Activated CD8-positive, alpha-beta T cell treated with anti-CD3 and anti-CD28 coated beads for 36 hours (primary cell): ENCODE measurements at regions of chr2 and their contacts with region 1.

Region 1: DNA sequence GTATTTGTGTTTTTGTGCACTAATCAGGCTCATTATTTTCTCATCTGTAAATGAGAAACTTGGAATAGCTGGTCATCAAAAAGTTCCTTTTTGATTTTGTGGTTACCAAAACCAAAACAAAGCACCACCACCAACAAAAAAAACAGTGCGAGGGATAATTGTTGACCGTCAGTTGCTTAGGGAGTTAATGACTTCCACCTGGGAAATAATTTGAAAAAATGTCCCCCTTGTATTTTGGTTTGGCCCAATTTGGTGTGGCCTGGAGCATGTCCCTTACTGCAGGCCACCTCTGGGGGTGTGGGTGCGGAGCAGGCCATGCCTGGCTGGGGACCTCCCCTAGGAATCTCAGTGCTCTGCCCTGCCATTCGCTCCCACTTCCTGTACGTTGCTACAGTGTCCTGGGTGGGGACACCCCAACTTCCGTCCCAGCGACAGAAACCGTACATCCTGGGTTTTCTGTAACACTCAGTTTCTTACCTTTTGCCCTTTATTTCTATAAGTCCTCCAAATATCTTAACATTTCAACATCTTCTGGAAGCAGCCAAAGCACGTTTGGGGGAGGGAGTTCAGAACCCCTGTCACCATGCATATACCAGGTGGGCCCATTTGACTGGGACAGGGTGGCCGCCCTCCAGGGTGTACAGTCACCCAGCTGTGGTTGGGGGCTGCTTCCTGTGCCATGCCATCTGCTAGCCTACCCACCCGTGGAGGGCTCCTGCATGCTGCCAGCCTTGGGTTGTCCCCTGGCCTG is 31.3 kb downstream of the NCK2 start:
- DNase-seq: peak; percentile 63
- ATAC-seq: peak; percentile 70
- H3K4me3 Mint-ChIP-seq: peak overlapping the region; percentile 52
- H3K27ac Mint-ChIP-seq: peak overlapping the region; percentile 87
- H3K4me1 Mint-ChIP-seq: peaks cover 90% of the 10 kb centered on the region
- H3K27me3 Mint-ChIP-seq: no peaks in the 10 kb centered on the region
- CTCF ChIP-seq: no peak

Region 2: GRCh38 chr2:105373895-105374401 is 402.0 kb before region 1 on chr2:
- CTCF ChIA-PET with region 1: no interaction called
- POLR2A ChIA-PET with region 1: no interaction called
- intact Hi-C with region 1: no loop called
- DNase-seq: peak; percentile 16
- ATAC-seq: peak; percentile 37
- H3K4me3 Mint-ChIP-seq: peak overlapping the region; percentile 33
- H3K27ac Mint-ChIP-seq: peak overlapping the region; percentile 84
- H3K4me1 Mint-ChIP-seq: peaks cover 6% of the 10 kb centered on the region
- H3K27me3 Mint-ChIP-seq: no peaks in the 10 kb centered on the region
- CTCF ChIP-seq: no peak

Region 3: DNA sequence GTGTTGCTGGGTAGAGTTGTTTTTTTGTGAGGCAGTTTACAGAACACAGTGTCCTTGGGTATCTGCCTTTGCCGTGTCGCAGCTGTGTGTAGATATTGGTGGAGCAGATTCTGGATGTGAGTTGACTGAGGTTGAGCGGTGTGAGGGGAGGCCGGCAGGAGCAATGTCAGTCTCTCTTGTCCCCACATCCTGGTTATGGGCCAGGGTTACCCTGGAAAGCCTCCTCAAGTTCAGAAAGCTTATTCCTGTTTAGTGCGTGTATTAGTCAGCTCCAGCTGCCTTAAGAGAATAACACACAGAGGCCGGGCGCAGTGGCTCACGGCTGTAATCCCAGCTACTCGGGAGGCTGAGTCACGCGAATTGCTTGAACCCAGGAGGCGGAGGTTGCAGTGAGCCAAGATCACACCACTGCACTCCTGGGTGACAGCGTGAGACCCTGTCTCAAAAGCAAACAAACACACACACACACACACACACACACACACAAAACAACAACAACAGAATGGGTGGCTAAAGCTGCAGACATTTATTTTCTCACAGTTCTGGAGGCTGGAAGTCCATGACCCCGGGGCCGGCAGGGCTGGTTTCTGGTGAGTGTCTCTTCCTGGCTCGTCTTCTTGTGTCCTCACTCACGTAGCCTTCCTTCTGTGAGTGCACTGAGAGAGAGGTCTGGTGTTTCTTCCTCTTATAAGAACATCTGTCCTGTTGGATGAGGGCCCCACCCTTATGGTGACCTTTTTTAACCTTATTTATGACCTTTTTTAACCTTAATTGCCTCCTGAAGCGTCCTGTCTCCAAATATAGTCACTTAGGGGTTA is 26.2 kb before region 1 on chr2:
- CTCF ChIA-PET with region 1: interaction called, 6 read pairs
- POLR2A ChIA-PET with region 1: interaction called, 20 read pairs
- intact Hi-C with region 1: no loop called
- DNase-seq: peak; percentile 67
- ATAC-seq: peak; percentile 4
- H3K4me3 Mint-ChIP-seq: peak overlapping the region; percentile 94
- H3K27ac Mint-ChIP-seq: peak overlapping the region; percentile 98
- H3K4me1 Mint-ChIP-seq: peaks cover 63% of the 10 kb centered on the region
- H3K27me3 Mint-ChIP-seq: no peaks in the 10 kb centered on the region
- CTCF ChIP-seq: no peak

Region 4: GRCh38 chr2:105789745-105790460 is 13.9 kb after region 1 on chr2:
- CTCF ChIA-PET with region 1: interaction called, 6 read pairs
- POLR2A ChIA-PET with region 1: interaction called, 23 read pairs
- intact Hi-C with region 1: no loop called
- DNase-seq: peak; percentile 87
- ATAC-seq: peak; percentile 82
- H3K4me3 Mint-ChIP-seq: peak overlapping the region; percentile 69
- H3K27ac Mint-ChIP-seq: peak overlapping the region; percentile 97
- H3K4me1 Mint-ChIP-seq: peaks cover 92% of the 10 kb centered on the region
- H3K27me3 Mint-ChIP-seq: no peaks in the 10 kb centered on the region
- CTCF ChIP-seq: no peak

Region 5: DNA sequence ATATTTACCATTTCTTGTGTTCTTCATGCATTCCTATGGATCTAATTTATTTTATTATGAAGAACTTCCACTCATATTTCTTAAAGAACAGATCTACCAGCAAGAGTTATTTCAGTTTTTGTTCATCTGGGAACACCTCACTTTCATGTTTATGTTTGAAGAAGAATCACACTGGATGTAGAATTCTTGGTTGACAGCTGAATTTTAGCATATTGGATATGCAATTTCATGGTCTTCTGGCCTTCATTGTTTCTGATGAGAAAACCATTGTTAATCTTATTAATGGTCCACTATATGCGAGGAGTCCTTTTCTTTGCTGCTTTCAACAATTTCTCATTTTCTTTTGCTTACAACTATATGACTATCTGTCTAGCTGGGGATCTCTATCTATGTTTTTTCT is 228.9 kb after region 1 on chr2:
- CTCF ChIA-PET with region 1: no interaction called
- POLR2A ChIA-PET with region 1: no interaction called
- intact Hi-C with region 1: no loop called
- DNase-seq: no peak
- ATAC-seq: no peak
- H3K4me3 Mint-ChIP-seq: no peak overlapping the region
- H3K27ac Mint-ChIP-seq: no peak overlapping the region
- H3K4me1 Mint-ChIP-seq: no peaks in the 10 kb centered on the region
- H3K27me3 Mint-ChIP-seq: no peaks in the 10 kb centered on the region
- CTCF ChIP-seq: no peak